ENCODE measurements at regions of chr1 and their contacts with region 1.

Region 1: DNA sequence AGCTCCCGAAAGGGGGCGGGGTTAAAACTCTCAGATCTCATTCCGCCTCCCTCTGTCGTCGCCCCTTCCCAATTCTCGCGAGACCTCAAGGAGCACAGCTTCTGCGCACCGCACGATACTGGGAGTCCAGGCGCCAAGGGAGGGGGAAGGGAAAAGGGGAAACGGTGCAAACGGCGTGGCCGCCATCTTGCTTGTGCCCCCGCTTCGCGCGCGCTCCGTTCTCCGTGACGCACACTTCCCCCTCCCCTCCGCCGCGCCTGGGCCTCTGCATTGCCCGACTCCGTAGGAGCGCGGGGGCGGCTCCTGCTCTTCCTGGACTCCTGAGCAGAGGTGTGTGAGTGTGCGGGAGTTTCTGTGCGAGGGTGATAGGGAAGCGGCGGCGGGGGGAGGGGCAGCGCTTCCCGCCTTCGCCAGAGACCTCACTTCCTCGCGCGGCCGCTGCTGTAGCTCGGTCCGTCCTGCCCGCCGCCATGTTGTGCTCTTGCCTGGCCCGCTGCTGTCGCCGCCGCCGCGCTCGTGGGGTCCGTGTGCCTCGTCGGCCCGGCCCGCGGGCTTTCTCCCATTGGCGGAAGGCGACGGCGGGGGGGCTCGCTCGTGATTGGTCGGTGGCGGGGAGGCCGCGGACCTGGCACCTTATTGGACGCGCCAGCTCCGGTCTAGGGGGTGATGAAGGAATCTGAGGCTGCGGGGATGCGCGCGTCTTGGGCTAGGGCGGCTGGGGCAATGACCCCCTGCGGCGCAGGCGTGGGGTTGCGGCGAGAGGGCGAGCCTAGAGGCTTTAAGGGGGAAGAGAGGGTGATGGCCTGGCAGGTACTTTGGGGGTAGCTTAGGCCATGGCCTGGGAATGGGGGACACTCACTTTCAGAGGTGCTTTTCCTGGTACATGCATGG is at the start of gene NFYC:
- DNase-seq: peak; percentile 99
- ATAC-seq: peak; percentile 92
- H3K4me3 ChIP-seq: peak within 1 kb of the TSS; percentile 74 to 81 (median 81)
- H3K27ac ChIP-seq: peak within 1 kb of the TSS; percentile 97
- H3K4me1 ChIP-seq: peaks cover 55% of the 10 kb centered on the region
- H3K27me3 ChIP-seq: peaks cover 0 to 3% of the 10 kb centered on the region in 2 experiments; a peak in 1 of 5 replicates
- CTCF ChIP-seq: peak; percentile 1; the same call in 1 of the 2 replicates
- EP300 ChIP-seq: peak in 1 of 2 experiments; percentile 41; a peak in 1 of 4 replicates
- POLR2A ChIP-seq: peak; percentile 74 to 97
- RAD21 ChIP-seq: peak; percentile 66
- total RNA-seq, gene NFYC: 33.9 and 41.3 TPM in 2 replicates

Region 2: DNA sequence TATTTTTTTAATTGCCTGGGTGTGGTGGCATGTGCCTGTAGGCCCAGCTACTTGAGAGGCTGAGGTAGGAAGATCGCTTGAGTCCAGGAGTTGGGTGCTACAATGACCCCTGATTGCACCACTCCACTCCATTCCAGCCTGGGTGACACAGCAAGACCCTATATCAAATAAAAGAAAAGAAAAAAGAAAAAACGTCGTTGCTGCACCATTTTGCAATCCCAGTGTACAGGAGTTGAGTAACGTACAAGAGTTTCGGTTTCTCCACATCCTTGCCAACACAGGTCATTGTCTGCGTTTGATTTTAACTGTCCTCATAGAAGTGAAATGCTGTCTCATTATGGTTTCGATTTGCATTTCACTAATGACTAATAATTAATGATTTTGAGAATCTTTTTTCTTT is 152.4 kb before region 1 on chr1:
- CTCF ChIA-PET with region 1: no interaction called
- POLR2A ChIA-PET with region 1: no interaction called
- in situ Hi-C with region 1: no loop called
- intact Hi-C with region 1: no loop called
- DNase-seq: no peak
- ATAC-seq: no peak
- H3K4me3 ChIP-seq: no peak overlapping the region
- H3K27ac ChIP-seq: no peak overlapping the region
- H3K4me1 ChIP-seq: peaks cover 19% of the 10 kb centered on the region
- H3K27me3 ChIP-seq: no peaks in the 10 kb centered on the region
- CTCF ChIP-seq: no peak
- EP300 ChIP-seq: no peak
- POLR2A ChIP-seq: no peak
- RAD21 ChIP-seq: no peak

Region 3: GRCh38 chr1:40668769-40669525 is 22.8 kb before region 1 on chr1:
- CTCF ChIA-PET with region 1: no interaction called
- POLR2A ChIA-PET with region 1: interaction called, 12 read pairs
- in situ Hi-C with region 1: no loop called
- intact Hi-C with region 1: no loop called
- DNase-seq: peak; percentile 44
- ATAC-seq: peak; percentile 51
- H3K4me3 ChIP-seq: peak overlapping the region in 2 of 3 experiments; percentile 32 to 53; a peak in 3 of 6 replicates
- H3K27ac ChIP-seq: no peak overlapping the region
- H3K4me1 ChIP-seq: peaks cover 25% of the 10 kb centered on the region
- H3K27me3 ChIP-seq: no peaks in the 10 kb centered on the region; a peak in 2 of 5 replicates
- CTCF ChIP-seq: peak; percentile 81
- EP300 ChIP-seq: no peak
- POLR2A ChIP-seq: no peak
- RAD21 ChIP-seq: peak; percentile 82; the same call in 1 of the 2 replicates

Region 4: DNA sequence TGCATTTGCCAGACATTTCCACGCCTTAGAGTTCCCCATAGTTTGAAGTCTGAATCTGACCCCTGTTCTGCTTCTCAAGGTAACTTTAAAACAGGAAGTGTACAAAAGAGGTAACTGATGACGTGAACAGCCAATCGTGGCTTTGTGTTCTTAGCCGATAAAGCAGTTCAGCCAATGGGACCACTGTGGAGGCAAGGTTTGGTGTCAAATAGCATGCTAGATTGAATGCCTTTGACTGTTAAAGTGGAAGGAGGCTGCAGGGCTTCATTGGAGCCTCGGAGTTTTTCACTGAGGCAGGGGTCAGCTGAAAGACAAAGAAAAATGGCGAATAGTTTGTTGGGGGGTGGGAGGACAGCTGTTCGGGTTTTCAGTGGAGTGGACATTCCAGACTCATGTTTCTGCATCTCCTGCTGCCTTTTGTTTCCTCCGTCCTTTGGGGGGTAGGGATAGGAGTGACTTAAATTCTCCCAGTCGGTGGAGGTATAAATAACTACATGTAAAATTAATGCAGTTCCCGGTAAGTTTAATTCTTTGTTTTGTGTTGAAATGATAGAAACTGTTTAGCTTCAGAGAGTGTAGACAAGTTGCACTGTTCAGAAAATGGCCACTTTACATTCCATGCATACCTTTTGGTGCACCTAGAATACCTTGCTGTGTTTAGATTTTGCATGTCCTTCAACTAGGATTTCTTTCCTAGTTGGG is 17.5 kb after region 1 on chr1:
- CTCF ChIA-PET with region 1: no interaction called
- POLR2A ChIA-PET with region 1: interaction called, 147 read pairs
- in situ Hi-C with region 1: no loop called
- intact Hi-C with region 1: loop called (anchors 1 kb)
- DNase-seq: peak; percentile 97
- ATAC-seq: peak; percentile 95
- H3K4me3 ChIP-seq: peak overlapping the region; percentile 63 to 85 (median 76)
- H3K27ac ChIP-seq: peak overlapping the region; percentile 96
- H3K4me1 ChIP-seq: peaks cover 67% of the 10 kb centered on the region
- H3K27me3 ChIP-seq: no peaks in the 10 kb centered on the region; a peak in 1 of 5 replicates
- CTCF ChIP-seq: no peak
- EP300 ChIP-seq: peak in 1 of 2 experiments; percentile 14; a peak in 1 of 4 replicates
- POLR2A ChIP-seq: peak; percentile 75 to 94
- RAD21 ChIP-seq: no peak

Region 5: GRCh38 chr1:40755067-40755466 is 63.3 kb after region 1 on chr1:
- CTCF ChIA-PET with region 1: no interaction called
- POLR2A ChIA-PET with region 1: interaction called, 91 read pairs
- in situ Hi-C with region 1: no loop called
- intact Hi-C with region 1: loop called (anchors 5 kb)
- DNase-seq: no peak
- ATAC-seq: no peak
- H3K4me3 ChIP-seq: no peak overlapping the region
- H3K27ac ChIP-seq: peak overlapping the region; percentile 13
- H3K4me1 ChIP-seq: peaks cover 57% of the 10 kb centered on the region
- H3K27me3 ChIP-seq: no peaks in the 10 kb centered on the region
- CTCF ChIP-seq: no peak
- EP300 ChIP-seq: no peak
- POLR2A ChIP-seq: no peak
- RAD21 ChIP-seq: no peak

Region 6: GRCh38 chr1:40825435-40825788 is 133.6 kb after region 1 on chr1:
- CTCF ChIA-PET with region 1: no interaction called
- POLR2A ChIA-PET with region 1: interaction called, 6 read pairs
- in situ Hi-C with region 1: no loop called
- intact Hi-C with region 1: loop called (anchors 1 kb)
- DNase-seq: no peak
- ATAC-seq: peak; percentile 28
- H3K4me3 ChIP-seq: peak overlapping the region in 2 of 3 experiments; percentile 30 to 55; a peak in 3 of 6 replicates
- H3K27ac ChIP-seq: no peak overlapping the region
- H3K4me1 ChIP-seq: peaks cover 45% of the 10 kb centered on the region
- H3K27me3 ChIP-seq: no peaks in the 10 kb centered on the region; a peak in 1 of 5 replicates
- CTCF ChIP-seq: no peak
- EP300 ChIP-seq: no peak
- POLR2A ChIP-seq: no peak
- RAD21 ChIP-seq: no peak

Region 7: DNA sequence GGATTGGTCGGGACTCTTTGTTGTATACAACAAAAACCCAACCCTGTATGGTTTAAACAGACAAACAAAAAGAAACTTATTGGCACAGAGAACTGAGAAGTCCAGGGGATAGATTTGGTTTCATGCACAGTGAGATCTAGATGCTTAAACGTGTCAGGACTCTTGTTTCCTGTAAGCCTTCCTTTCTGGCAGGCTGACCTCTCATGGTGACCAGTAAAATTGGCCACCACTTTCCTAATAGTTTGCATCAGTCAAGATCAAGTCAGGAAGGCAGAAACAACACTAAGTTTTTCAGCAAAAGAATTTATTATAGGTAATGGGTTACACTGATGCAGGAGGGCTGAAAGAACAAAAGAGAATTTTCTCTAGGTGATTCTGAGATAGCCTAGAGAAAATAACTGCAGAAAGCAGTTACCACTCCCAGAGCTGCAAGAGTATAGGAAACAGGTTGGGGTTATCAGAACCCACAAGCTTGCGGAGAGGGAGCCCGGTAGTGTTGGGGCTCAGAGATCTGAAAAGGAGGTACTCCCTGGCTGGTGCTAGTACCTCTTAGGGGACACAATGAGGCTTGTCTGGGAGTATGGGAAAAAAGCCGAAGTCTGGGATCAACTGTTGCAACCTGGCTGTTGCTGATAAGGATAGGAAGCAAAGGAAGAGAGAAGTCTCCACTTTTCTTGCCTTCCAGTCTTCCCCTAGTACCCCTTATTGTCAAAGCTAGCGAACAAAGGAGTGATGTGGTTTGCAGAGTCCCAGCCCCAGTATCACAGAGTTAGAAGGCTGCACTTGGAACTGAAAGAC is 148.9 kb after region 1 on chr1:
- CTCF ChIA-PET with region 1: no interaction called
- POLR2A ChIA-PET with region 1: no interaction called
- in situ Hi-C with region 1: no loop called
- intact Hi-C with region 1: no loop called
- DNase-seq: no peak
- ATAC-seq: no peak; the same call in 2 of the 3 replicates
- H3K4me3 ChIP-seq: no peak overlapping the region
- H3K27ac ChIP-seq: no peak overlapping the region
- H3K4me1 ChIP-seq: peaks cover 14% of the 10 kb centered on the region; the same call in 1 of the 2 replicates
- H3K27me3 ChIP-seq: peaks cover 0 to 6% of the 10 kb centered on the region in 2 experiments; a peak in 1 of 5 replicates
- CTCF ChIP-seq: peak; percentile 18
- EP300 ChIP-seq: no peak
- POLR2A ChIP-seq: no peak
- RAD21 ChIP-seq: no peak

Region 8: GRCh38 chr1:40862008-40862863 is 170.5 kb after region 1 on chr1 and contains the start of gene CITED4:
- CTCF ChIA-PET with region 1: no interaction called
- POLR2A ChIA-PET with region 1: interaction called, 16 read pairs
- in situ Hi-C with region 1: no loop called
- intact Hi-C with region 1: no loop called
- DNase-seq: peak; percentile 88
- ATAC-seq: peak; percentile 87
- H3K4me3 ChIP-seq: peak within 1 kb of the TSS; percentile 38 to 76 (median 52)
- H3K27ac ChIP-seq: peak within 1 kb of the TSS; percentile 47
- H3K4me1 ChIP-seq: peaks cover 40% of the 10 kb centered on the region
- H3K27me3 ChIP-seq: peaks cover 2 to 32% of the 10 kb centered on the region in 2 experiments; a peak in 4 of 5 replicates
- CTCF ChIP-seq: peak; percentile 89
- EP300 ChIP-seq: no peak
- POLR2A ChIP-seq: peak; percentile 97 to 99
- RAD21 ChIP-seq: peak; percentile 57; the same call in 1 of the 2 replicates
- total RNA-seq, gene CITED4: 5.8 and 9.9 TPM in 2 replicates

Region 9: GRCh38 chr1:40898431-40898901 is 206.7 kb after region 1 on chr1:
- CTCF ChIA-PET with region 1: no interaction called
- POLR2A ChIA-PET with region 1: no interaction called
- in situ Hi-C with region 1: no loop called
- intact Hi-C with region 1: no loop called
- DNase-seq: no peak
- ATAC-seq: no peak
- H3K4me3 ChIP-seq: no peak overlapping the region
- H3K27ac ChIP-seq: no peak overlapping the region
- H3K4me1 ChIP-seq: peaks cover 33% of the 10 kb centered on the region
- H3K27me3 ChIP-seq: peaks cover 1 to 2% of the 10 kb centered on the region in 2 experiments; a peak in 2 of 5 replicates
- CTCF ChIP-seq: no peak
- EP300 ChIP-seq: no peak
- POLR2A ChIP-seq: no peak
- RAD21 ChIP-seq: no peak